Breast epithelium (tissue), 4 donors: ENCODE measurements at regions of chr4 and their contacts with region 1.

Region 1: GRCh38 chr4:153344131-153345010 is at the start of gene MND1:
- DNase-seq: peak; percentile 58 to 81
- H3K4me3 ChIP-seq: peak within 1 kb of the TSS; percentile 71 to 85 (median 78)
- H3K27ac ChIP-seq: no peak within 1 kb of the TSS
- H3K4me1 ChIP-seq: no peaks in the 10 kb centered on the region
- H3K27me3 ChIP-seq: no peaks in the 10 kb centered on the region
- CTCF ChIP-seq: peak in 2 of 3 donors; percentile 68 to 71
- POLR2A ChIP-seq: no peak
- total RNA-seq, gene MND1: 0.64 TPM in 1 of 3 donors, not detected in the others

Region 2: DNA sequence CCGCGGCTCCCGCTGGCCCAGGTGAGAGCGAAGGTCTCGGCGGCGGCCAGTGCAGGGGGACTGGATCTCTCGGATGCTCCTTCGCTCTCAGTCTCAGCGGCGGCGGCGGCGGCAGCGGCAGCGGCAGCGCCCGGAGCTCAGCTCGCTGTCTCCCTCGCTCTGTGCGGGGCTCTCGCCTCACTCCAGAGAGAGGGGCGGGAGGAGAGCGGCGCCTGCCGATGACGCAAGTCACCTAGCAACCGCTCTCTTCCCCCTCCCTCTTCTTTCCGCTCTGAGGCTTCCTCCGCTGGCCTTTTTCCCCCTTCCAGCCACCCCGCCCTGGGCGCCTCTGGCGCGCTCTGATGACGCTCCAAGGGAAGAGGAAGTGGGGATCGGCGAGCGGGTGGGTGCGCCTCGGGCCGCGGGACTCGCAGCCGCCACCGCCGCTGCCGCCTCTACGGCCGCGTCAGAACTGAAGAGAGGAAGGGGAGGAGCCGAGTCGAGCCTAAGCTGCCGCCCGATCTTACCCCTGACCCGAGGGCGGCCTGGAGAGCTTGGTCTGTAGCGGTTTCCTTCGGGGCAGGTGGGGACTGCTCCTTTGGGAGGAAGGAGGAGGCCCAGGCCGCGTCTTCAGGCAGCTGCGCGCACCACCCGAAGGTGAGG is 808.3 kb before region 1 on chr4 and contains the start of gene FBXW7:
- intact Hi-C with region 1: no loop called
- DNase-seq: peak; percentile 98
- H3K4me3 ChIP-seq: peak within 1 kb of the TSS; percentile 84 to 98 (median 97)
- H3K27ac ChIP-seq: peak within 1 kb of the TSS; percentile 95 to 97
- H3K4me1 ChIP-seq: peaks cover 0 to 13% of the 10 kb centered on the region in 2 donors
- H3K27me3 ChIP-seq: no peaks in the 10 kb centered on the region
- CTCF ChIP-seq: peak in 1 of 3 donors; percentile 18
- POLR2A ChIP-seq: peak; percentile 86
- total RNA-seq, gene FBXW7: 55.7 to 247 (median 117) TPM

Region 3: GRCh38 chr4:153159728-153160221 is 184.6 kb before region 1 on chr4:
- intact Hi-C with region 1: no loop called
- DNase-seq: no peak
- H3K4me3 ChIP-seq: no peak overlapping the region
- H3K27ac ChIP-seq: no peak overlapping the region
- H3K4me1 ChIP-seq: no peaks in the 10 kb centered on the region
- H3K27me3 ChIP-seq: no peaks in the 10 kb centered on the region
- CTCF ChIP-seq: no peak
- POLR2A ChIP-seq: no peak

Region 4: DNA sequence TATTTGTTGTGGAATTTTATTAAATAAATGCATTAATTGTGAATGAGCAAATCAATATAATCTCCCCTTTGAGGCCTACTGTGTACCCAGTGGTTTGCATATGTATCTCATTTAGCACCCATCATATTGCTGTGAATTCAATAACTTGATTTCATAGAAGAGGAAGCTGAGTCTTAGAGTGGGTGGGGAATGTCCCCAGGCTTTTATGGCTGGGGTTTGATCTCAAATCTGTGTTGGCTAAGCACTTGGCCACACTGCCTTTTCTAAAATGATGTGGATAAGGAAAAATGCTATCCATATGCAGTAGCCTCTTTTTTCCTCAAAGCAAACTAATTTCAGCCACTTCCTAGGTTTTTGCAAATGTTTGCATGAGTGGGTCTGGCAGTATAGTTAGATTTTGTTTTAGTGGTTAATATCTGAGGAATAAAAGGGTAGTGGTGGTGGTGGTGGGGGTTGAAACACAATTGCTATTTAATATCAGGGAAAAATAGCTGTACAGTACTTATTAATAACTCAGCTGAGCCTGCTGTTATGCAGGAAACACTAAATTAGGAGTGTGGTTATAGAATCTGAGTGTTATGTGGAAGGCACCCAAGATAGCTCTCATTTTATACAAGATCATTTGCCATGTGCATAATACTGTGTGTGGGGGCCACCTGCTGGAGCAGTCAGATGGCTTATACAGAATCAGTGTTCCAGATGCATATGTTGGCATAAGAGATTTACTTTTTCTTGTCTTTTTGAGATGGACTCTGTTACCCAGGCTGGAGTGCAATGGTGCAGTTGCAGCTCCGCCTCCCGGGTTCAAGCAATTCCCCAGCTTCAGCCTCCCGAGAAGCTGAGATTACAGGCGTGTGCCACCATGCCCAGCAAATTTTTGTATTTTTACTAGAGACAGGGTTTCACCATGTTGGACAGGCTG is 229.8 kb after region 1 on chr4:
- intact Hi-C with region 1: loop called (anchors 5 kb)
- DNase-seq: peak in 1 of 2 donors; percentile 60
- H3K4me3 ChIP-seq: no peak overlapping the region
- H3K27ac ChIP-seq: no peak overlapping the region
- H3K4me1 ChIP-seq: peaks cover 0 to 4% of the 10 kb centered on the region in 2 donors
- H3K27me3 ChIP-seq: no peaks in the 10 kb centered on the region
- CTCF ChIP-seq: peak in 2 of 3 donors; percentile 54 to 57
- POLR2A ChIP-seq: no peak

Region 5: GRCh38 chr4:153634738-153635353 is 290.5 kb after region 1 on chr4:
- intact Hi-C with region 1: loop called (anchors 5 kb)
- DNase-seq: no peak
- H3K4me3 ChIP-seq: no peak overlapping the region
- H3K27ac ChIP-seq: no peak overlapping the region
- H3K4me1 ChIP-seq: no peaks in the 10 kb centered on the region
- H3K27me3 ChIP-seq: no peaks in the 10 kb centered on the region
- CTCF ChIP-seq: peak; percentile 46 to 65 (median 60)
- POLR2A ChIP-seq: no peak

Region 6: DNA sequence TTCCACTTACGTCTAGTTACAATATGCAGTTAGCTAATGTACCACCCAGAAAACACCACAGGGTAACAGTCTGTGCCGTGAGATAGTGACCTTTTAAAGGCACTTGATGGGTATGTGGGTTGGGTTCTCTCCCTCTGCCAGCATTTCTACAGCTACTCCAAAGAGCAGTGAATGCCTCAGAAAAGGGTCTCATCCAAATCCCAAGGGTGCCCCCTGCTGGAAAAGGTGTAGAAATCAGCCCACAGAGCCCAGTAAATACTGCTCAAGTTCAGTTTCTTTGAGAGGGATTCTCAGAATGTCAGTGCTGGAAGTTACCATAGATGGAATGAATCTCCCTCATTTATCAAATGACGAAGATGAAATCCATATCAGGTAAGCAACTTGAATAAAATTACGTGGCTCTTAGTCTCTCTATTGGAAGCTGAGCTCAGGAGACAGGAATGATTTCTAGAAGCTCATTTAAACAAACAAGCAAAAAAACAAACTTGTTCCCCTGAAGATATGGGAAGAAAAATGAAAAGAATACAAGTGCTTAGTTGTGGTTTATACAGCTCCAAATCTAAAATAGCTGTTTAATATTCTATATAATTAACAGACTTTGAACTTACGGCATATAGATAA is 405.9 kb after region 1 on chr4:
- intact Hi-C with region 1: loop called (anchors 10 kb)
- DNase-seq: peak in 1 of 2 donors; percentile 51
- H3K4me3 ChIP-seq: no peak overlapping the region
- H3K27ac ChIP-seq: no peak overlapping the region
- H3K4me1 ChIP-seq: peaks cover 0 to 5% of the 10 kb centered on the region in 2 donors
- H3K27me3 ChIP-seq: no peaks in the 10 kb centered on the region
- CTCF ChIP-seq: peak; percentile 43 to 65 (median 49)
- POLR2A ChIP-seq: no peak

Region 7: DNA sequence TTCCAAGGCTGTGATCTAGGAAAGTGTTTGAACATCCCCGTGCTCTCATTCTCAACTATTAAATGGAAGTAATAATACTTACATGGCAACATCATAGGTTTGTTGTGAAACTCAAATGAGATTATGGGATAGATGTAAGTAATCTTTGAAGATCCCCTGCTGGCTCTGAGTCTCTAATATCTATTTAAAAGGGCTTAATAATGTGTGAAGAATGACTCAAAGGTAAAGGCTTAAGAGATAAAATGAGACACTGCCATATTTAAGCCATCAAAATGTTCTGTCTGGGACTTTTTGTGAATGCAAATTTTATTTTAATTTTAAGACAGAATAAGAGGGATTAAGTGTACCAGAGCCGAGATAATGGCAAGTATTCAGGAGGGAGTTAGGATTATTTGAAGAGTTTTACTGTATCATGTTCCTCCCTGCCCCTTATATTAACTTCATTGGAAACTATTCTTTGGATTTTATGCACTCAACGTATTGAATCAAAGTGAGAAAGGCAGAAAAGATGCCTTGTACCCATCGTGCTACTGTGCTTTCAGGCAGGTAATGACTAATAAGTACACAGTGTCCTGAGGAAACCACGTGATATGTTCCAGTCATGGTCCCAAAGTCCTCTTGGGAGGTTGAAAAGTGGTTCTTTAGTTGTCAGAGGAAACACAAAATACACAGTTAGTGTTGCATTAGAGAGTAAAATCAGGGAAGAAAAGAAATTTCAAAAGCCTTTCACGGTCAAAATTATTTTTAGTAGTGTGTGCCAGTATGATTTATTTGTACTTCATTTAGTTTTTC is 1629.1 kb after region 1 on chr4:
- intact Hi-C with region 1: no loop called
- DNase-seq: no peak
- H3K4me3 ChIP-seq: no peak overlapping the region
- H3K27ac ChIP-seq: no peak overlapping the region
- H3K4me1 ChIP-seq: no peaks in the 10 kb centered on the region
- H3K27me3 ChIP-seq: no peaks in the 10 kb centered on the region
- CTCF ChIP-seq: no peak
- POLR2A ChIP-seq: no peak